HepG2 (cell line): ENCODE measurements at regions of chr1 and their contacts with region 1.

Region 1: DNA sequence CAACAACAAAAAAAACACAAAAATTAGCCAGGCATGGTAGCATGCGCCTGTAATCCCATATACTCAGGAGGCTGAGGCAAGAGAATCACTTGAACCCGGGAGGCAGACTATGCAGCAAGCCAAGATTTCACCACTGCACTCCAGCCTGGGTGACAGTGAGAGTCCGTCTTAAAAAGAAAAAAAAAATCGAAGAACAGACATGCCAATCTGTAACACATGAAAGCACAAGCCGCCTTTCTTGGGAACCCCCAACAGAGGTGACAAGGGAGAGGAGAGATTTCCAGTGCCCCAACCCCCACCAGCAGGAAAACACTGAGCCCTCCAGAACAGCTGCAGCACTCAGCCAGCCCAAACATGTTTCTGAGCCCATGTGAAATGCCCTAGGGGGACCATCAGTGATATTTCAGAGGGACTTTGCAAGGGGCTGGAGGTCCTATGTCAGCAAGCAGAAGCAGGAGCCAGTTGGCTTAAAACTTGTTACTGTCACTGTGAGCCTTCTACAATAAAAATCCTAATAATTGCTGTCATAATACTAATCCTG is 14.2 kb upstream of the EFNA1 start:
- DNase-seq: no peak
- ATAC-seq: no peak
- H3K4me3 ChIP-seq: no peak overlapping the region
- H3K27ac ChIP-seq: no peak overlapping the region
- H3K4me1 ChIP-seq: peaks cover 23% of the 10 kb centered on the region
- H3K27me3 ChIP-seq: peaks cover 0 to 7% of the 10 kb centered on the region in 2 experiments; a peak in 1 of 5 replicates
- CTCF ChIP-seq: no peak
- EP300 ChIP-seq: no peak
- POLR2A ChIP-seq: no peak
- RAD21 ChIP-seq: no peak

Region 2: GRCh38 chr1:155167166-155168104 is 53.9 kb after region 1 on chr1:
- CTCF ChIA-PET with region 1: interaction called, 14 read pairs
- POLR2A ChIA-PET with region 1: no interaction called
- in situ Hi-C with region 1: no loop called
- intact Hi-C with region 1: no loop called
- DNase-seq: peak; percentile 82
- ATAC-seq: peak; percentile 87
- H3K4me3 ChIP-seq: peak overlapping the region; percentile 37 to 75 (median 48); a peak in 5 of 6 replicates
- H3K27ac ChIP-seq: no peak overlapping the region
- H3K4me1 ChIP-seq: peaks cover 36% of the 10 kb centered on the region
- H3K27me3 ChIP-seq: 0 out of 5 replicates have a peak, but pooled peaks cover 0 to 8% of the 10 kb centered on the region in 2 experiments
- CTCF ChIP-seq: peak; percentile 95
- EP300 ChIP-seq: no peak
- POLR2A ChIP-seq: no peak
- RAD21 ChIP-seq: peak; percentile 97

Region 3: GRCh38 chr1:155514582-155515187 is 401.2 kb after region 1 on chr1:
- CTCF ChIA-PET with region 1: no interaction called
- POLR2A ChIA-PET with region 1: no interaction called
- in situ Hi-C with region 1: no loop called
- intact Hi-C with region 1: loop called (anchors 5 kb)
- DNase-seq: no peak
- ATAC-seq: no peak
- H3K4me3 ChIP-seq: no peak overlapping the region
- H3K27ac ChIP-seq: no peak overlapping the region
- H3K4me1 ChIP-seq: peaks cover under 1% of the 10 kb centered on the region
- H3K27me3 ChIP-seq: no peaks in the 10 kb centered on the region
- CTCF ChIP-seq: no peak
- EP300 ChIP-seq: no peak
- POLR2A ChIP-seq: no peak
- RAD21 ChIP-seq: no peak